ENCODE measurements at regions of chr20 and their contacts with region 1.

Region 1: GRCh38 chr20:54123587-54124180 is 50.1 kb downstream of the CYP24A1 start:
- DNase-seq: peak; percentile 100
- ATAC-seq: peak; percentile 95
- H3K4me3 ChIP-seq: 0 out of 4 replicates have a peak overlapping the region, but pooled peaks of 1 of the 2 experiments have one; percentile 4
- H3K27ac ChIP-seq: peak overlapping the region; percentile 96
- H3K4me1 ChIP-seq: peaks cover 60 to 90% of the 10 kb centered on the region in 2 experiments
- H3K27me3 ChIP-seq: no peaks in the 10 kb centered on the region
- CTCF ChIP-seq: no peak
- POLR2A ChIP-seq: no peak
- RAD21 ChIP-seq: peak; percentile 8; the same call in 1 of the 2 replicates

Region 2: GRCh38 chr20:54173653-54174456 is 50.2 kb after region 1 on chr20 and contains the start of gene CYP24A1:
- CTCF ChIA-PET with region 1: interaction called, 5 read pairs
- POLR2A ChIA-PET with region 1: interaction called, 4 read pairs
- RAD21 ChIA-PET with region 1: no interaction called
- intact Hi-C with region 1: loop called (anchors 5 kb)
- DNase-seq: no peak
- ATAC-seq: peak; percentile 53
- H3K4me3 ChIP-seq: peak within 1 kb of the TSS; percentile 41 to 51
- H3K27ac ChIP-seq: peak within 1 kb of the TSS; percentile 94
- H3K4me1 ChIP-seq: peaks cover 87 to 99% of the 10 kb centered on the region in 2 experiments
- H3K27me3 ChIP-seq: no peaks in the 10 kb centered on the region
- CTCF ChIP-seq: no peak
- POLR2A ChIP-seq: peak; percentile 99
- RAD21 ChIP-seq: no peak
- total RNA-seq, gene CYP24A1: 267 TPM

Region 3: DNA sequence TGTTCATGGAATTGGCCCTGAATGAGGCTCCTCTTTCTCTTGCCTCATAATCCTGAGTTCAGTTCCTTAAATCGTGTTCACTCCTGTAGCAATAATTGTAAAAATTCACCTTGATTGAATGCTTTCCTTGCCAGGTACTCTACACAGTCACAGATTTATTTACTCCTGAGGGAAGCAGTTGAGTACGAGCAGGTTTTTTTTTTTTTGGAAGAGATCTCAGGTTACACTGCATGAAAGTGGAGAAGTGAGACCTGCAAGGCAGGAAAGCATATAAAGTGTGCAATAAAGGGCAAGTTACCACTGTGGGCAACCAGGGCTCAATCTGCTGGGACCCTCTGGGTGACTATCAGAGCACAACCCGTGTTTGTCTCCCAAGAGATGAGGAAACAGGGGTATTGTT is 258.7 kb after region 1 on chr20:
- CTCF ChIA-PET with region 1: no interaction called
- POLR2A ChIA-PET with region 1: no interaction called
- RAD21 ChIA-PET with region 1: no interaction called
- intact Hi-C with region 1: no loop called
- DNase-seq: no peak
- ATAC-seq: peak; percentile 17; the same call in 1 of the 2 replicates
- H3K4me3 ChIP-seq: no peak overlapping the region
- H3K27ac ChIP-seq: no peak overlapping the region
- H3K4me1 ChIP-seq: peaks cover 0 to 3% of the 10 kb centered on the region in 2 experiments; a peak in 1 of 4 replicates
- H3K27me3 ChIP-seq: peaks cover 11% of the 10 kb centered on the region; the same call in 1 of the 2 replicates
- CTCF ChIP-seq: no peak
- POLR2A ChIP-seq: no peak
- RAD21 ChIP-seq: no peak

Measured in HCT116 (cell line).